Caco-2 (cell line): ENCODE measurements at regions of chr2 and their contacts with region 1.

Region 1: GRCh38 chr2:18209919-18210639 is 331.6 kb downstream of the KCNS3 start:
- DNase-seq: peak; percentile 67 to 79
- H3K4me3 ChIP-seq: no peak overlapping the region
- H3K4me3 Mint-ChIP-seq: peak overlapping the region; percentile 36
- H3K27ac Mint-ChIP-seq: peak overlapping the region; percentile 56
- H3K4me1 ChIP-seq: peaks cover 30% of the 10 kb centered on the region
- H3K4me1 Mint-ChIP-seq: peaks cover 21% of the 10 kb centered on the region
- H3K27me3 ChIP-seq: no peaks in the 10 kb centered on the region
- H3K27me3 Mint-ChIP-seq: no peaks in the 10 kb centered on the region
- CTCF ChIP-seq: no peak

Region 2: DNA sequence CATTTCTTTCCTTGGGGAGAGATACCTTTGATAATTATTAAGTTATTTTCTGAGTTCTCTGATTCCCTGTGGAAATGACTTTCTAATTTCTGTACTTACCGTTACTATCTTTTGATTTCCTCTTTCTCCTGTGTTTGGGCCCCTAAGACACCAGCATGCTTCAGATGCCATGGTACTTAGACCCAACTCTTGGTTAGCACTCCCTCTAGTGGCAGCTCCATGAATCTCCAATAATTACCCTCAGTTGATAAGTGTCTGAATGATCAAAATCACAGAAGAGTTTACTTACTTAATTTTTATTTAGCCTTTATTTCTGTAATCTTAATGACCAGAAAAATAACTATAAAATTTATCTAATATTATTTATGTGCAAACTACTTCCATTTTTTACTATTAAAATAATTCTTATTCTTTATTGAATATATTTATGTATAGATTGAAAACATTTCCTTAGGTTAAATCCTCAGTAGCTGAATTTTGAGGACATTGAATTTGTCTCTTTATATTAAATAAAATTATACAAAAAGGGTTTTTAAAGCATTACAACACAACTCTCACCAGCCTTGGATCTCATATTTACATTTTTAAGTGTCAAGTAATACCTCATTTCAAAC is 31.2 kb before region 1 on chr2:
- CTCF ChIA-PET with region 1: no interaction called
- POLR2A ChIA-PET with region 1: no interaction called
- intact Hi-C with region 1: loop called (anchors 1 kb)
- DNase-seq: peak in 1 of 2 experiments; percentile 59
- H3K4me3 ChIP-seq: no peak overlapping the region
- H3K4me3 Mint-ChIP-seq: no peak overlapping the region
- H3K27ac Mint-ChIP-seq: no peak overlapping the region
- H3K4me1 ChIP-seq: no peaks in the 10 kb centered on the region
- H3K4me1 Mint-ChIP-seq: peaks cover 14% of the 10 kb centered on the region
- H3K27me3 ChIP-seq: no peaks in the 10 kb centered on the region
- H3K27me3 Mint-ChIP-seq: peaks cover 2% of the 10 kb centered on the region
- CTCF ChIP-seq: peak; percentile 76 to 80

Region 3: GRCh38 chr2:18232731-18233438 is 22.8 kb after region 1 on chr2:
- CTCF ChIA-PET with region 1: no interaction called
- POLR2A ChIA-PET with region 1: no interaction called
- intact Hi-C with region 1: loop called (anchors 1 kb)
- DNase-seq: peak in 1 of 2 experiments; percentile 18
- H3K4me3 ChIP-seq: no peak overlapping the region
- H3K4me3 Mint-ChIP-seq: peak overlapping the region; percentile 0
- H3K27ac Mint-ChIP-seq: peak overlapping the region; percentile 40
- H3K4me1 ChIP-seq: peaks cover 29% of the 10 kb centered on the region
- H3K4me1 Mint-ChIP-seq: peaks cover 19% of the 10 kb centered on the region
- H3K27me3 ChIP-seq: no peaks in the 10 kb centered on the region
- H3K27me3 Mint-ChIP-seq: no peaks in the 10 kb centered on the region
- CTCF ChIP-seq: no peak